CD8-positive, alpha-beta T cell (primary cell): ENCODE measurements at regions of chr5 and their contacts with region 1.

Region 1: DNA sequence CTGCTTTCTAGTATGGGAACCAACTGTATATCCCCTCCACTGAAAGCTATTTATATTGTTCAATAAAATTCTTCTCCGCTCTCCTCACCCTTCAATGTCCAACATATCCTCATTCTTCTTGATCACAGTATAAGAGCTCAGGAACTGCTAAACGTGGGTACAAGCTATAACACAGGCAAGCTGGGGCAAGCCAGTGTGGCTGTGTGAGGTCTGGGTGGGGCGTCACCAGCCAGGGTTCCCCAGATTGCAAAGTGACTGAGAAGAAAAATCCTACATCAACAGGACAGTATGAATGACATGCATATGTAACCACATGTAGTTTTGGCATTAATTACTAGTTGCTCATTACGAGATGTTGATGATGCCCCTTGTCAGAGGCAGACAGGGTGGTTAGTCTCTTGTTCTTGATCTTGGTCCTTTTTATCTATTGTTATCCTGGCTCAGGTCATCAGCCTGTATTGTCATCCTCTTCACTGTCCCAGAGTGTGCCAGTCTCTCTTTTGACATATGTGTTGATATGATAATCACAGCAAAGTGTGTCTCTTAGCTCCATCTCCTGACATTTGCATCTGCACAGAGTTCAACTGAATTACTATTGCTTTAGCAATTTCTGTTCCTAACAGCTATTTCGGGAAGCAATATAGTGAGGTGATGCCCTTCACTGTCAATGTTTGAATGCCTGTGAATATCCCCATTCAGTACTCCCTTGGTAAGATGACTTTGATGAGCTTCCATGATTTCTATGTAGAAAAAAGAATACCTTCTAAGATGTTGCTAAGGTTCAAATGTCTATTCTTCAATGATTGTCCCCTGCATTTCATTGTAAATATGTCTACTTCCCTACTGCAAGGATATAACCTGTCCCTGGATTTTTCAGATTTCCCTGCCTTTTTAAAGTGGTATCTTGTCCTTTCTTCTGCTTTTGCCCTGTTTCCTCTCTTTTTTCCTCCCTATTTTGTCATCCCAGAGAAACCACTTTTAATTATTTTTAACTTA is 140.3 kb downstream of the MAT2B start:
- DNase-seq: no peak
- ATAC-seq: no peak
- H3K4me3 ChIP-seq: no peak overlapping the region
- H3K4me3 Mint-ChIP-seq: no peak overlapping the region
- H3K27ac ChIP-seq: no peak overlapping the region
- H3K27ac Mint-ChIP-seq: no peak overlapping the region
- H3K4me1 ChIP-seq: no peaks in the 10 kb centered on the region
- H3K4me1 Mint-ChIP-seq: no peaks in the 10 kb centered on the region
- H3K27me3 ChIP-seq: no peaks in the 10 kb centered on the region
- H3K27me3 Mint-ChIP-seq: no peaks in the 10 kb centered on the region
- CTCF ChIP-seq: no peak

Region 2: DNA sequence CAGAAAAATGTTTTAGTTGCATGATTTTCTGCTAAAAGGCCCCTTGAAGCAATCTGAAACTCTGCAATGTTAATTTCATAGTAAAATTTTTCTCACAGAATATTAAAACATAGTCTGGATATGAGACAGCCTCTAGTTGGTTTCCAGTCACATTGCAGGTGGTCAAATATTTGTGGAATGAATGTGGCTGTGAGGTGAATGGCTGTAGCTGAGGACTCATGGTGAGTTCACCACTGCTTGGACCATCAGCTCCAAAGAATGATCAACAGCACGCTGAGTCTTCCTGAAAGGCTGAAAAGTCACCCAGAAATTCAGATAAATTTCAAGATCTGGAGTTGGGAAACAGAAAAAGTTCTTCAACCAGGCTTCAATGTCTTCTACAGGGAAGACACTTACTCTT is 60.5 kb before region 1 on chr5:
- CTCF ChIA-PET with region 1: no interaction called
- POLR2A ChIA-PET with region 1: no interaction called
- intact Hi-C with region 1: loop called in 1 of 2 experiments (anchors 1 kb)
- DNase-seq: no peak
- ATAC-seq: no peak
- H3K4me3 ChIP-seq: no peak overlapping the region
- H3K4me3 Mint-ChIP-seq: no peak overlapping the region
- H3K27ac ChIP-seq: no peak overlapping the region
- H3K27ac Mint-ChIP-seq: no peak overlapping the region
- H3K4me1 ChIP-seq: no peaks in the 10 kb centered on the region
- H3K4me1 Mint-ChIP-seq: no peaks in the 10 kb centered on the region
- H3K27me3 ChIP-seq: no peaks in the 10 kb centered on the region
- H3K27me3 Mint-ChIP-seq: peaks cover 25% of the 10 kb centered on the region
- CTCF ChIP-seq: no peak